ENCODE measurements at regions of chr17 and their contacts with region 1.

Region 1: GRCh38 chr17:50758989-50759544 is 8.3 kb downstream of the ANKRD40CL start:
- DNase-seq: no peak
- H3K4me3 Mint-ChIP-seq: no peak overlapping the region
- H3K27ac Mint-ChIP-seq: peak overlapping the region; percentile 2
- H3K4me1 Mint-ChIP-seq: peaks cover 16% of the 10 kb centered on the region
- H3K27me3 Mint-ChIP-seq: no peaks in the 10 kb centered on the region
- CTCF ChIP-seq: no peak

Region 2: DNA sequence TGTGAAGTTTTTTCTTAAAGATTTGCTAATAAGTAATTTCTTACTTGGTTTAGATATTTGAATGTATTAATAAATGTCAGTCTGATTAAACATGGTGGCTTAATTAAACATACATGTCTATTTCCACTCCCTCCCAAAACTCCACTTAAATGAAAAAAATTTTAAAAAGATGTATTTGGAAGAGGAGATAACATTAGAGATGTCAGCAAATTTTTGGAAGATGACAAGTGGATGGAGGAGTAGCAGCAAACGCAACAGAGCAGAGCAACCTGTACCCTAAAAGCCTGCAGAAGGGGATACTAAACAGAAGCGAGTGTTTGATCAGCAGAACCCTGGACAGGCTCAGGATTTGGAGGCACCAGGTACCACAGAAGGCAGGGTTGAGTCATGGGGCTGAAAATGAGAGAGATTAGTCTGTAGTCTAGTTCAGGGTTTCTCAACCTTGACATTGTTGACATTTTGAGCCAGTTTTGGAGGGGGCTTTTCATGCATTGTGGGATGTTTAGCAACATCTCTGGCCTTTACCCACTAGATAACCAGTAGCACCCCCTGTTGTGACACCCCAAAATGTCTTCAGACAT is 21.9 kb before region 1 on chr17:
- CTCF ChIA-PET with region 1: interaction called, 4 read pairs
- intact Hi-C with region 1: loop called (anchors 2 kb)
- DNase-seq: no peak
- H3K4me3 Mint-ChIP-seq: no peak overlapping the region
- H3K27ac Mint-ChIP-seq: no peak overlapping the region
- H3K4me1 Mint-ChIP-seq: peaks cover 21% of the 10 kb centered on the region
- H3K27me3 Mint-ChIP-seq: no peaks in the 10 kb centered on the region
- CTCF ChIP-seq: no peak

Region 3: GRCh38 chr17:50986989-50987660 is 228.1 kb after region 1 on chr17:
- CTCF ChIA-PET with region 1: interaction called, 10 read pairs
- intact Hi-C with region 1: no loop called
- DNase-seq: no peak
- H3K4me3 Mint-ChIP-seq: no peak overlapping the region
- H3K27ac Mint-ChIP-seq: no peak overlapping the region
- H3K4me1 Mint-ChIP-seq: no peaks in the 10 kb centered on the region
- H3K27me3 Mint-ChIP-seq: no peaks in the 10 kb centered on the region
- CTCF ChIP-seq: no peak